Mammary epithelial cell (primary cell): ENCODE measurements at regions of chr19 and their contacts with region 1.

Region 1: DNA sequence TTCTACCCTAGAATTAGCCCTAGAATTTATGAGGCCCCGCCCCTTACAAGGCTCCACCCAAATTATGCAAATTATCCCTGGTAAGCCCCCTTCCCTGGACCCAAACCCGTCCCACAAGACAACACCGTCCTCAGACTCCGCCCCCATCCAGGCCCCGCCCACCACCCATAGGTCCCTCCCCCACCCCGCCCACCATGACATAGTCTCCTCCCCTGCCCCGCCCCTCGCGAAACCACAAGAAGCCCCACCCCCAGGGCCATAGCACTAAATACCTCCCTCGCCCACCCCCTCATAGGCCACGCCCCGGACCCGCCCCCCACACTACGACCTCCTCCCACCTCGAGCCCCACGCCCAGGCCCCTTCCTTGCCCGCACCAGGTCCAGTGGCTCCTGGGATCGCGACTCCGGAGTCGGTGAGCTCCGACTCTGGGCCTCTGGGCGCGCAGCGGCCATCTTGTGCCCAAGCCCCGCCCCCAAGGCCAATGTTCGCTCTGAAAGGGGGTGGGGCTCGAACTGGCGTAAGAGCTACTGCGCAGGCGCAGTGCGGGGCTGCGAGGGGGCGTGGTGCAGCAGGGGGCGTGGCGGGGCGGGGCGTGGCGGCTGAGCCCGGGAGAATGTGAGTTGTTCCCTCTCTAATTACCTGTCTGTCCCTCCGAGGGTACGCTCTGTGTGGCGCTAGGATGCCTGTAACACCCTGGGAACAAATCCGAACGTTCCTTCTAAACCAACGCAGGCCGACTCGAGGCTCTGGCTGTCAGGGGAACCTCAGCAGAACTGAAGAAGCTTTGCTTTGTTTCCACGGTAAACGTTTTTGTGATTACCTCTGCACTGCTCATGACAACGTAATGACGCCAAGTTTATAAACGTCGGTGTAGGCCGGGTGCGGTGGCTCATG is at the start of gene ZNF784:
- DNase-seq: peak; percentile 85
- H3K4me3 ChIP-seq: peak within 1 kb of the TSS; percentile 43 to 76 (median 54)
- H3K27ac ChIP-seq: peak within 1 kb of the TSS; percentile 39
- H3K4me1 ChIP-seq: peaks cover 4% of the 10 kb centered on the region
- H3K27me3 ChIP-seq: no peaks in the 10 kb centered on the region
- CTCF ChIP-seq: no peak
- total RNA-seq, gene ZNF784: 4.2 to 6.1 TPM

Region 2: DNA sequence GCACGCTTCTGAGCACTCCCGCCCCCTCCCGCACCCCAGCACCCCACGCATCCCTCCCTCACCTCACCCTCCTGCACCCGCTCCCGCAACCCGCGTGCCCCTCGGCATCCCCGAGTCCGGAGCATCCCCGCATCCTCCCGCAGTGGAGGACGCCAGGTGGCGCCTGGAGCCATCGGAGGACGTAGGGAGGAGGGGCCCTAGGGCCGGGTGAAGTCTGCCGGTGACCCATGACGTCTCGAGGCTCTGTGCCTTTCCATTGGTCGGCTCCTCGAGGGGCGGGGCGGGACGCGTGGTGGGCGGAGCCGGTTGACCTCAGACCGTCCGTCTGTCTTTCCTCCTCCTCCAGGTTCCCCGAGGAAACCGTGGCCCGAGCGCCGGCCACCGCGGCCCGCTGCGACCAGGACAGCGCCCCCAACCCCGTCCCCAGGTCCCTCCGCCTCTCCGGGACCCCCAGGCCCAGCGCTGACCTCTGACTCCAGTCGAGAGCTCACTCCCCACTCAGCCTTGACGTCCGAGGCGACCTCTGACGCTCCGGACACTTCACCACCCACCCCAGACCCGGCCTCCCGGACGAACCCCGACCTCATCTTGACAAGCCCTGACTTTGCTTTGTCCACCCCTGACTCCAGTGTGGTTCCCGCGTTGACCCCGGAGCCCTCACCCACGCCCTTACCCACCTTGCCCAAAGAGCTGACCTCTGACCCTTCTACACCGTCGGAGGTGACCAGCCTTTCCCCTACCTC is 107.3 kb before region 1 on chr19:
- CTCF ChIA-PET with region 1: no interaction called
- dilution Hi-C with region 1: no loop called
- in situ Hi-C with region 1: loop called in 1 of 2 experiments (anchors 5 kb)
- intact Hi-C with region 1: no loop called
- DNase-seq: peak; percentile 82
- H3K4me3 ChIP-seq: peak overlapping the region; percentile 25 to 58 (median 27)
- H3K27ac ChIP-seq: no peak overlapping the region
- H3K4me1 ChIP-seq: no peaks in the 10 kb centered on the region
- H3K27me3 ChIP-seq: no peaks in the 10 kb centered on the region
- CTCF ChIP-seq: peak; percentile 63 to 97

Region 3: GRCh38 chr19:55526216-55527196 is 97.8 kb before region 1 on chr19:
- CTCF ChIA-PET with region 1: no interaction called
- dilution Hi-C with region 1: loop called (anchors 5 kb)
- in situ Hi-C with region 1: no loop called
- intact Hi-C with region 1: no loop called
- DNase-seq: no peak
- H3K4me3 ChIP-seq: no peak overlapping the region
- H3K27ac ChIP-seq: no peak overlapping the region
- H3K4me1 ChIP-seq: no peaks in the 10 kb centered on the region
- H3K27me3 ChIP-seq: no peaks in the 10 kb centered on the region
- CTCF ChIP-seq: no peak